ENCODE measurements at regions of chr1 and their contacts with region 1.

Region 1: DNA sequence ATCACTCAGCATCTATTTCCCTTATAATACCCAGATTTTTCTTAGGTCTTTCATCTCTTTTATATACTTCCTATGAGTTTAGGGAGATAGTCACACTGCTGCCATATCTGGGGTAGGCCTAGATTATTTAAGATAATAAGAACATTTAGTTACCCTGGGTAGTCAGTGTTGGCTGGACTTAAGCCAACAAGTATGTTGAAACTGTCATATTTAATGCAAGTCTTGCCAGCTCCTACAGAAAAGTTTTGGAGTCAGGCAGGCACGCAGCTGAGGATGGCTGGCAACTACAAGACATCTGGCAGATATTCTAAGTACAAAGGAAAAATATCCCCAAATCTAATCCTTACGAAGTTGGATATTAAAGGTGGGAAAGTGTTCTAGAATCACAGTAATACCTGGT is 19.2 kb upstream of the DEPDC1 start:
- DNase-seq: no peak
- H3K4me3 ChIP-seq: no peak overlapping the region
- H3K27ac ChIP-seq: no peak overlapping the region
- H3K4me1 ChIP-seq: no peaks in the 10 kb centered on the region
- H3K27me3 ChIP-seq: no peaks in the 10 kb centered on the region
- CTCF ChIP-seq: no peak
- POLR2A ChIP-seq: no peak

Region 2: GRCh38 chr1:66519988-66520387 is 1996.1 kb before region 1 on chr1:
- intact Hi-C with region 1: loop called (anchors 10 kb)
- DNase-seq: no peak
- H3K4me3 ChIP-seq: no peak overlapping the region
- H3K27ac ChIP-seq: no peak overlapping the region
- H3K4me1 ChIP-seq: no peaks in the 10 kb centered on the region
- H3K27me3 ChIP-seq: no peaks in the 10 kb centered on the region
- CTCF ChIP-seq: no peak
- POLR2A ChIP-seq: no peak